Esophagus squamous epithelium (tissue), 5 donors: ENCODE measurements at regions of chr18 and their contacts with region 1.

Region 1: GRCh38 chr18:11733031-11733430 is 44.0 kb downstream of the GNAL start:
- DNase-seq: no peak
- H3K4me3 ChIP-seq: peak overlapping the region in 2 of 4 donors; percentile 25 to 57
- H3K27ac ChIP-seq: no peak overlapping the region
- H3K4me1 ChIP-seq: peaks cover 0 to 5% (median 0%) of the 10 kb centered on the region in 3 donors
- H3K27me3 ChIP-seq: peaks cover 0 to 12% (median 0%) of the 10 kb centered on the region in 4 donors
- CTCF ChIP-seq: peak; percentile 75 to 90 (median 83)
- POLR2A ChIP-seq: no peak

Region 2: GRCh38 chr18:11654736-11655605 is 78.1 kb before region 1 on chr18:
- intact Hi-C with region 1: loop called (anchors 5 kb)
- DNase-seq: no peak
- H3K4me3 ChIP-seq: no peak overlapping the region
- H3K27ac ChIP-seq: no peak overlapping the region
- H3K4me1 ChIP-seq: peaks cover 0 to 11% (median 4%) of the 10 kb centered on the region in 3 donors
- H3K27me3 ChIP-seq: peaks cover 0 to 34% (median 0%) of the 10 kb centered on the region in 4 donors
- CTCF ChIP-seq: peak; percentile 41 to 92 (median 79)
- POLR2A ChIP-seq: no peak

Region 3: GRCh38 chr18:11785458-11786055 is 52.5 kb after region 1 on chr18:
- intact Hi-C with region 1: loop called (anchors 10 kb)
- DNase-seq: no peak
- H3K4me3 ChIP-seq: no peak overlapping the region
- H3K27ac ChIP-seq: no peak overlapping the region
- H3K4me1 ChIP-seq: peaks cover 0 to 16% (median 7%) of the 10 kb centered on the region in 3 donors
- H3K27me3 ChIP-seq: no peaks in the 10 kb centered on the region
- CTCF ChIP-seq: no peak
- POLR2A ChIP-seq: no peak

Region 4: GRCh38 chr18:12005538-12006487 is 272.8 kb after region 1 on chr18:
- intact Hi-C with region 1: no loop called
- DNase-seq: no peak
- H3K4me3 ChIP-seq: no peak overlapping the region
- H3K27ac ChIP-seq: peak overlapping the region; percentile 79 to 84 (median 80)
- H3K4me1 ChIP-seq: peaks cover 0 to 77% (median 37%) of the 10 kb centered on the region in 3 donors
- H3K27me3 ChIP-seq: no peaks in the 10 kb centered on the region
- CTCF ChIP-seq: no peak
- POLR2A ChIP-seq: no peak

Region 5: GRCh38 chr18:12049978-12050811 is 317.2 kb after region 1 on chr18:
- intact Hi-C with region 1: loop called (anchors 10 kb)
- DNase-seq: no peak
- H3K4me3 ChIP-seq: no peak overlapping the region
- H3K27ac ChIP-seq: no peak overlapping the region
- H3K4me1 ChIP-seq: no peaks in the 10 kb centered on the region
- H3K27me3 ChIP-seq: no peaks in the 10 kb centered on the region
- CTCF ChIP-seq: no peak
- POLR2A ChIP-seq: no peak